ENCODE measurements at regions of chr9 and their contacts with region 1.

Region 1: DNA sequence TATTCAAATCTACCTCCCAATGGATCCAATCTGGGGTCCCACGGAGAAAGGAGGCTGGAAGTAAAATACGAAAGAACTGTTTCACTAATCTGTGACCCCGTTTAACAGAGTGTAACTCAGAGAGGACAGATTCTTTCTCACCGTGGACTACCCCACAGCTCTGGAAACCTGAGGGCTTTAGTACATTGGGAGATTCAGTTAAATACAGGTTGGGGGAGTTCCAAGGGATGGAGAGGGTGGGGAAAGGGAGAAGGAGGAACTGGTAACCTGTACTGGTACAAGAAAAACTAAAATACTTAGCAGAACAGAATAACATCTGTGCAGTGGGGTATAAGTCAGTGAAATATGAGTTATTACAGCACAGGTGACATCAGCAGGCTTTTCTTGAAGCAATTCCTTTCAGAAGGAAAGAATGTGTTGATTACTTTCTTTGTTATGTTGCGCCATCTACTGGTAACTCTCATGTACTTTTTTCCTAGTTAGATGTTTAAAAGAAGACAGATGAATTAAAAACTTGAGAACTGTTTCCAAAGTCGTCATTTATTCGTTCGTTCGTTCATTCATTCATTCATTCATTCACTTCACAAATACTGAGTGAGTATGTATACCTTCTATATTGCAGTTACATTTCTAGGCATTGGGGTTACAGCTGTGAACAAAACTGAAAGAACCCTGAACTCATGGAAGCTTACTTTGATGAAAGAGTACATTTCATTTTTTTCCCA is 30.0 kb upstream of the STOM start:
- DNase-seq: peak; percentile 80
- H3K4me3 Mint-ChIP-seq: no peak overlapping the region
- H3K27ac Mint-ChIP-seq: no peak overlapping the region
- H3K4me1 Mint-ChIP-seq: peaks cover 20% of the 10 kb centered on the region
- H3K27me3 Mint-ChIP-seq: no peaks in the 10 kb centered on the region
- CTCF ChIP-seq: peak; percentile 63

Region 2: DNA sequence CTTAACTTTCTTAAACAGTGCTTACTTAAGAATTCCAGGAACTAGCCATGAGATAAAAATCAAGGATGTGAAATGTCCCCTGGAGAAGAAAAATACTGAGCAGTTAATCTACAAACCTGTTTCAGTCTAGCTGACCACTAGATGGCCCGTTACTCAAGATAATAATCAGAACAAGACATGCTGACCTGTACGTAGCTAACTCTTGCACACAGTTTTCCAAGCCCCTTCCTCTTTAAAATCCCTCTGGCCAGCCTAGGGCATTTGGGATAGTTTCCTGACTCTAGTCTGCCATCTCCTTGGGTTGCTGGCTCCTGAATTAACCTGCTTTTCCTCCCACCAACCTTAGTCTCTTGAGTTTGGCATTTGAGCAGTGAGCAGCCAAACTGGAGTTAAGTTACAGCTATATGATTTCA is 414.2 kb before region 1 on chr9:
- CTCF ChIA-PET with region 1: interaction called, 6 read pairs
- POLR2A ChIA-PET with region 1: no interaction called
- intact Hi-C with region 1: loop called (anchors 2 kb)
- DNase-seq: peak; percentile 61
- H3K4me3 Mint-ChIP-seq: no peak overlapping the region
- H3K27ac Mint-ChIP-seq: no peak overlapping the region
- H3K4me1 Mint-ChIP-seq: no peaks in the 10 kb centered on the region
- H3K27me3 Mint-ChIP-seq: no peaks in the 10 kb centered on the region
- CTCF ChIP-seq: peak; percentile 58

Region 3: GRCh38 chr9:121333950-121334562 is 66.0 kb before region 1 on chr9:
- CTCF ChIA-PET with region 1: interaction called, 3 read pairs
- POLR2A ChIA-PET with region 1: interaction called, 13 read pairs
- intact Hi-C with region 1: no loop called
- DNase-seq: no peak
- H3K4me3 Mint-ChIP-seq: no peak overlapping the region
- H3K27ac Mint-ChIP-seq: peak overlapping the region; percentile 68
- H3K4me1 Mint-ChIP-seq: peaks cover 13% of the 10 kb centered on the region
- H3K27me3 Mint-ChIP-seq: no peaks in the 10 kb centered on the region
- CTCF ChIP-seq: no peak

Region 4: DNA sequence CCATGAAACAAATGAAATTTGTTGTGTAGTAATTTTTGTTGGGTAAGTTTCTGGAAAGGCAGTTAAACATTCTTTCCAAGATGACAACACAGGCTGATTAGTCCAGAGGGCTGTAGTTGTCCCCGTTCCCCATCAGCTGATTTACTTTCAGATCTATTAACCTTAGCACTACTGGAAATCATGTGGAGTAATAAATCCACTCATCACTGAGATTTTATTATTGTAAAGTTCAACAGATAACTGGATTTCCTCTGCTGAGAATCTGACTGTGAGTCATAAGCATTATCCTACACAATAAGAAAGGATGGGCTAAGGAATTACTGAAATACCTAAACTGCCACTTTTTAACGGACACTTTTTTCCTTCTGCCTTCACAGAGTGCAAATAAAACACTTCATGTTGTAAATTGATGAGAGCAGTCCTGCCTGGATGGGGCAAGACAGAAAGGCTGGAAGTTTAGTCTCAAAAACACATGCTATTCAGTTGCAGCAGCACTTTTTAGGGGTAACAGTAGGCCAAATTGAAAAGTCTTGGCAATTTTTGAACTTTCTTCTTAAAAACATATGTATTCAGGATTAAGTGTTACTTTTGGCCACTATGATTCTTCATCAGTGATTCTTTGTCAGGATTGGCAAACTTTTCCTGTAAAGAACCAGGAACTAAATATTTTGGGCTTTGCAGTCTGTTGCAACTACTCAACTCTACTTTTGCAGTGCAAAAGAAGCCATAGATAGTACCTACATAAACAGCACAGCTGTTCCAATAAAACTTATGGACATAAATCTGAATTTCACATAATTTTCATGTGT is 37.0 kb before region 1 on chr9:
- CTCF ChIA-PET with region 1: interaction called, 19 read pairs
- POLR2A ChIA-PET with region 1: interaction called, 6 read pairs
- intact Hi-C with region 1: no loop called
- DNase-seq: peak; percentile 47
- H3K4me3 Mint-ChIP-seq: peak overlapping the region; percentile 54
- H3K27ac Mint-ChIP-seq: peak overlapping the region; percentile 66
- H3K4me1 Mint-ChIP-seq: peaks cover 50% of the 10 kb centered on the region
- H3K27me3 Mint-ChIP-seq: no peaks in the 10 kb centered on the region
- CTCF ChIP-seq: no peak

Region 5: GRCh38 chr9:121383715-121384114 is 16.3 kb before region 1 on chr9:
- CTCF ChIA-PET with region 1: interaction called, 10 read pairs
- POLR2A ChIA-PET with region 1: interaction called, 6 read pairs
- intact Hi-C with region 1: no loop called
- DNase-seq: no peak
- H3K4me3 Mint-ChIP-seq: no peak overlapping the region
- H3K27ac Mint-ChIP-seq: no peak overlapping the region
- H3K4me1 Mint-ChIP-seq: no peaks in the 10 kb centered on the region
- H3K27me3 Mint-ChIP-seq: no peaks in the 10 kb centered on the region
- CTCF ChIP-seq: no peak

Measured in MCF 10A (cell line).